ENCODE measurements at regions of chr1 and their contacts with region 1.

Region 1: GRCh38 chr1:221203224-221204054 is 324.2 kb downstream of the HLX start:
- DNase-seq: peak; percentile 94
- H3K4me3 ChIP-seq: no peak overlapping the region
- H3K27ac ChIP-seq: peak overlapping the region; percentile 24 to 69 (median 62)
- H3K4me1 ChIP-seq: peaks cover 17 to 28% (median 24%) of the 10 kb centered on the region in 4 donors
- H3K27me3 ChIP-seq: no peaks in the 10 kb centered on the region
- CTCF ChIP-seq: peak; percentile 78 to 89 (median 88)
- EP300 ChIP-seq: no peak
- POLR2A ChIP-seq: no peak

Region 2: DNA sequence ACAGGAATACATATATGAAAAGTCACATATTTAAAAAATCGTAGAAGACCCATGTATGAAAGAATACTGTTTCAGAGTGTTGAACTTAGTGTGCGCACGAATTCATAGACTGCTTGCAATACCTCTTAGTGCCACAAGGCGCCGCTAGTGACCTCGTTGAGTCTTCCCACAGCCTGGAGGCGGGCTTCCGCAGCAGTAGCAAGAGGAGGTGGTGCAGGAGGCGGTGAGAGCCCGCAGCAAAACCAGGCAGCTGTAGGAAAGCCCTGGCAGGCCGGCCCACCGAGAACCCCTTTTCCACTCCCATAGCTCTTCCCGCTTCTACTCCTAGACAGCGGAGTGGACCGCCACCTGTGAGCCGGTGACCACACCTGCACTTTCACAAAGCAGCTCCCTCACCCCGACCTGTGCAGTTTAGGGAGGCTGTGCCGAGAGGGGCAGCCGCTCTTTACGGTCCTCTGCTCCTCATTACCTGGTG is 393.2 kb before region 1 on chr1:
- intact Hi-C with region 1: loop called (anchors 5 kb)
- DNase-seq: no peak
- H3K4me3 ChIP-seq: peak overlapping the region in 1 of 4 donors; percentile 37
- H3K27ac ChIP-seq: no peak overlapping the region
- H3K4me1 ChIP-seq: peaks cover 0 to 25% (median 19%) of the 10 kb centered on the region in 4 donors
- H3K27me3 ChIP-seq: no peaks in the 10 kb centered on the region
- CTCF ChIP-seq: peak; percentile 95 to 97 (median 96)
- EP300 ChIP-seq: no peak
- POLR2A ChIP-seq: no peak

Region 3: DNA sequence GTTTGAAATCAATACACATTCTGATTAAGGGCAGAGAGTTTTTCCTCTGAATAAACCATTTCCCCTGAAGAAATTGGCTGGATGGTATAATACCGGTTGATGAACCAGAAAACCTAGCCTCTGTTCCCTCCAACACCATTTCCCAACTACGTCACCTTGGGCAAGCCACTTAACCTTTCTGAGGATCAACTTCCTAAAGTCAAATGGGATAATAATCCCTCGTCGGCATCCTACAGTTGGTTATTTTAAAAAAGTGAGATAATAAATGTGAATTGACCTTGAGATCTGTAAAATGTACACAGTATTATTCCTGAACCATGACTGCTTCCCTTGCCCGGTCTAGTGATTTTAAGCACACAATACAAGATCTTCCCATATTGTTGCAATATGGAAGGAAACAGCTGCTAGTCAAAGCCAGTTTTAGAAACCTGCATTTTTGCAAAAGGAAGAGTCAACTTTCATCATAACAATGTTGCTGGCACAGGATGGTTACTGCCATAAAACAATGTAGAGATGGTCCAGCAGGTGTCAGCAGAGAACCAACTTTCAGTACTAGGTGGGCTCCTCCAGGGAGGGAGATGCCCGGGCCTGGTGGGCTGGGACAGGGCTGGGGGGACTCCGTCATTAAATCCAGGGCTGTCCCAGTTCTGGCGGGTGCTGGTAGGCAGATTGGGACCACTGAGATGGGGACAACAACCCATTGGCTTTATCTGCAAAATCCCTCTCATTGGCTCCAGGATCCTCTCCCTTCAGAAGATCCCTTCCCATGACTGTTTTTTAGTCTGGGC is 329.4 kb before region 1 on chr1:
- intact Hi-C with region 1: loop called (anchors 5 kb)
- DNase-seq: no peak
- H3K4me3 ChIP-seq: no peak overlapping the region
- H3K27ac ChIP-seq: no peak overlapping the region
- H3K4me1 ChIP-seq: peaks cover 29 to 44% (median 39%) of the 10 kb centered on the region in 4 donors
- H3K27me3 ChIP-seq: no peaks in the 10 kb centered on the region
- CTCF ChIP-seq: peak; percentile 69 to 79 (median 74)
- EP300 ChIP-seq: no peak
- POLR2A ChIP-seq: no peak

Region 4: GRCh38 chr1:220908757-220909156 is 294.7 kb before region 1 on chr1:
- intact Hi-C with region 1: loop called (anchors 10 kb)
- DNase-seq: peak; percentile 21
- H3K4me3 ChIP-seq: no peak overlapping the region
- H3K27ac ChIP-seq: no peak overlapping the region
- H3K4me1 ChIP-seq: no peaks in the 10 kb centered on the region
- H3K27me3 ChIP-seq: no peaks in the 10 kb centered on the region
- CTCF ChIP-seq: peak; percentile 45 to 65 (median 60)
- EP300 ChIP-seq: no peak
- POLR2A ChIP-seq: no peak

Region 5: DNA sequence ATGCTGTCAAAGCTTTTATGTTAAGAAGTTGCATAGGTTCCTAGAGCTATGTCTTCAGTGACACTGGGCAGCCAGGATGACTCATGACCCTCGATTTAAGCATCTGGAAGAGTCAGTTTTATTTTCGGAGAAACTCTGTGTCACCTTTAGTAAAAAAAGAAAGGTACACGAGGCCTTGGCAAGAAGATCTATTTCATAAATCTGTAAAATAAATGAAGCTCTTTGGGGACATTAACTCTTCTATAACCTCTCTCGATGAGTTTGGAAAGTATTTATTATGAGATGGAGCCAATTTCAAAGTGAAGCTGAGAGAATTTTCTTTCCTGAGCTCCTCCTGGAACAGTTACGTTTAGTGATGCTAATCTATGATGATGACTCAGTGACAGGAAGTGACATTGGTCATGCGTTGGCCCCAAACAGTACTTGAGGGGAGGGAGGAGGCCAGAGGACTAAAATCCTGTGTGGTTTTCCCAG is 167.7 kb before region 1 on chr1:
- intact Hi-C with region 1: loop called (anchors 10 kb)
- DNase-seq: no peak
- H3K4me3 ChIP-seq: no peak overlapping the region
- H3K27ac ChIP-seq: no peak overlapping the region
- H3K4me1 ChIP-seq: peaks cover 22 to 50% (median 41%) of the 10 kb centered on the region in 4 donors
- H3K27me3 ChIP-seq: no peaks in the 10 kb centered on the region
- CTCF ChIP-seq: no peak
- EP300 ChIP-seq: no peak
- POLR2A ChIP-seq: no peak

Region 6: GRCh38 chr1:221239792-221240191 is 36.4 kb after region 1 on chr1:
- intact Hi-C with region 1: no loop called
- DNase-seq: no peak
- H3K4me3 ChIP-seq: no peak overlapping the region
- H3K27ac ChIP-seq: no peak overlapping the region
- H3K4me1 ChIP-seq: peaks cover 10 to 41% (median 29%) of the 10 kb centered on the region in 4 donors
- H3K27me3 ChIP-seq: no peaks in the 10 kb centered on the region
- CTCF ChIP-seq: no peak
- EP300 ChIP-seq: no peak
- POLR2A ChIP-seq: no peak

Region 7: DNA sequence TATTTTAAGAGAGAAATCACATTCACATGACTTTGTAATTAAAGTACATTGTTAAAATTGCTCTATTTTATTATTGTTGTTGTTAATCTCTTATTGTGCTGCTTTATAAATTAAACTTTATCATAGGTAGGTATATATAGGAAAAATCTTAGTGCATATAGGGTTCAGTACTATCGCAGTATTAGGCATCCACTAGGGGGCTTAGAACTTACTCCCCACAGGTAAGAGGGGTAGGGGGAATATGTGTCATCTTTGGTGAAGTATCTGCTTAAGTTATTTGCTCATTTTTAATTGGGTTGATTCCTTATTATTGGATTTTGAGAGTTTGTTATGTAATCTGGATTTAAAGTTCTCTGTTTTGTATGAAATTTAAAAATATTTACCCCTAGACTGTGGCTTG is 153.3 kb after region 1 on chr1:
- intact Hi-C with region 1: no loop called
- DNase-seq: no peak
- H3K4me3 ChIP-seq: no peak overlapping the region
- H3K27ac ChIP-seq: no peak overlapping the region
- H3K4me1 ChIP-seq: no peaks in the 10 kb centered on the region
- H3K27me3 ChIP-seq: no peaks in the 10 kb centered on the region
- CTCF ChIP-seq: no peak
- EP300 ChIP-seq: no peak
- POLR2A ChIP-seq: no peak

Region 8: DNA sequence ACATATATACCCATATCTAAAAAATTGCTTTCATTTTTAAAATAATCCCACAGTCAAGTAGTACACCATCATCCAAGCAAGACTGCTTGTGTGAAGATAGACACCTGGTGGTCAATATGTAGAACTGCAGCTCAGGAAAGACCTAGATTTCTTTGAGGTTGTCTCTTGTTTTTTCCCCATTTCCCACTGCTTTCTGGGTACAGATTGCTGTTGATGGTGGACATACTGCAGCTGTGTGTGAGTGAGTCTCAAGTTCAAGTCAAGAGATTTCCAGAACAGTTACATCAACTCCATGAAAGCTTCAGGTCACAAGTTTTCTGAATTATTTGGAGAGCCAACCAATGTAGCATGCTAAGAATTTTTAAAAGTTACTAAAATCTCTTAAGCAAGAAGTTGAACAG is 232.1 kb after region 1 on chr1:
- intact Hi-C with region 1: loop called (anchors 10 kb)
- DNase-seq: no peak
- H3K4me3 ChIP-seq: no peak overlapping the region
- H3K27ac ChIP-seq: peak overlapping the region; percentile 3 to 48 (median 23)
- H3K4me1 ChIP-seq: peaks cover 12 to 26% (median 24%) of the 10 kb centered on the region in 4 donors
- H3K27me3 ChIP-seq: no peaks in the 10 kb centered on the region
- CTCF ChIP-seq: peak; percentile 93 to 99 (median 95)
- EP300 ChIP-seq: no peak
- POLR2A ChIP-seq: no peak

Region 9: DNA sequence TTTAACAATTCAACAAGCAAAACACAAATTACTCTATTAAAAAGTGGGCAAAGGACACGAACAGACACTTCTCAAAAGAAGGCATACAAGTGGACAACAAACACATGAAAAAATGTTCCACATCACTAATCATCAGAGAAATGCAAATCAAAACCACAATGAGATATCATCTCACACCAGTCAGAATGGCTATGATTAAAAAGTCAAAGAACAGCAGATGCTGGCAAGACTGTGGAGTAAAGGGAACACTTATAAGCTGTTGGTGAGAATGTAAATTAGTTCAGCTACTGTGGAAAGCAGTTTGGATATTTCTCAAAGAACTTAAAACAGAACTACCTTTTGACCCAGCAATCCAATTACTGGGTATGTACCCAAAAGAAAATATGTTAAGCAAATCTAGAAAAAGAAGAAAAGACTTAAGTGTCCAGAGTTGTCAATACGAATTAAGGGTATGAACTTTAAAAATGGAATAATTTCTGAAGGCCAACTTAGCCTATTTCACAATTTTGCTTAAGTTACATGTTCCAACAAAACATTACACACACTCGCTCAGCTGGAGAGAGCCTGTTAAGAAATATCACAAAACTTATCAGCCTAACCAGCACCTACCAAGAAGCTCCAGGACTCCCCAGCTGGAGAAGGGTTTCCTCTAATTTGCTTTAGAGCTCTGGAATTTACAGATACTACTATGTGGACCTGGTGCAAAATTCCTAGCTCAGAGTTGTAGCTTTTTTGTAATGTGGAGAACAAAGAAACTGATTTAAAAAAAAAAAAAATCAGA is 306.3 kb after region 1 on chr1:
- intact Hi-C with region 1: no loop called
- DNase-seq: no peak
- H3K4me3 ChIP-seq: no peak overlapping the region
- H3K27ac ChIP-seq: no peak overlapping the region
- H3K4me1 ChIP-seq: no peaks in the 10 kb centered on the region
- H3K27me3 ChIP-seq: no peaks in the 10 kb centered on the region
- CTCF ChIP-seq: no peak
- EP300 ChIP-seq: no peak
- POLR2A ChIP-seq: no peak

Region 10: DNA sequence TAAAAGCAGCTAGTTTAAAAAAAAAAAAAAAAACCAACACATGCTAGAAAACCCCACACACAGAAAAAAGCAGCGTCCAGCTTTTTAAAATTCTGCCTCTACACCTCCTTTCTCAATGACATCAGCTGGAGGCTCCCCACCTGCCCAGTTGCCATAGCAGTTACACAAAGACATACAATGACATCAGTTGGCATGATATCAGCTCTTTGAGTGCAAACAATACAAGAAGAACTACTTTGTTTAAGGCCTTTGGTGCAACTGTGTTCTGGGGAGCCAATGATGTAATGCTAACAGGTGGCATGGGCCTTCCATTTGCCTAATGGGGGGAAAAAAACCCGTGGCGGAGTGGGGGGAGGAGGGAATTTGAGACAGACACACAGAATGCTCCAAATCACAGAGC is 505.5 kb after region 1 on chr1:
- intact Hi-C with region 1: no loop called
- DNase-seq: no peak
- H3K4me3 ChIP-seq: no peak overlapping the region
- H3K27ac ChIP-seq: peak overlapping the region; percentile 74 to 77 (median 76)
- H3K4me1 ChIP-seq: peaks cover 23 to 82% (median 79%) of the 10 kb centered on the region in 4 donors
- H3K27me3 ChIP-seq: no peaks in the 10 kb centered on the region
- CTCF ChIP-seq: no peak
- EP300 ChIP-seq: peak; percentile 27
- POLR2A ChIP-seq: no peak

Measured in esophagus muscularis mucosa (tissue), 4 donors.